ENCODE measurements at regions of chr1 and their contacts with region 1.

Region 1: DNA sequence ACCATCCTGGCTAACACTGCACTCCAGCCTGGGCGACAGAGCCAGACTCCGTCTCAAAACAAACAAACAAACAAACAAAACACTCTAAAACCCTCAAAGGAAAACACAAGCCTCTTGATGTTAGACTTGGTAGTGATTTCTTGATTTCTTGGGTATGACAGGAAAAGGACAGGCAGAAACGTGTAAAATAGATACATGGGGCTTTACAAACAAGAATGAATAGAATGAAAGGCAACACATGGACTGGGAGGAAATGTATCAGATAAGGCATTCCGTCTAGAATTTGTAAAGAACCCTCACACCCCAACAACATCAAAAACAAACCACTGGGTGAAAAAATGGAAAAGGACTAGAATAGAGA is 7.8 kb upstream of the PRXL2B start:
- DNase-seq: peak in 1 of 9 experiments; percentile 51
- ATAC-seq: no peak
- H3K4me3 ChIP-seq: peak overlapping the region; percentile 28 to 43
- H3K4me3 Mint-ChIP-seq: peak overlapping the region; percentile 76
- H3K27ac ChIP-seq: peak overlapping the region; percentile 81 to 93
- H3K27ac Mint-ChIP-seq: peak overlapping the region; percentile 96
- H3K4me1 ChIP-seq: peaks cover 57% of the 10 kb centered on the region
- H3K4me1 Mint-ChIP-seq: peaks cover 51% of the 10 kb centered on the region
- H3K27me3 ChIP-seq: no peaks in the 10 kb centered on the region
- H3K27me3 Mint-ChIP-seq: no peaks in the 10 kb centered on the region
- CTCF ChIP-seq: no peak

Region 2: DNA sequence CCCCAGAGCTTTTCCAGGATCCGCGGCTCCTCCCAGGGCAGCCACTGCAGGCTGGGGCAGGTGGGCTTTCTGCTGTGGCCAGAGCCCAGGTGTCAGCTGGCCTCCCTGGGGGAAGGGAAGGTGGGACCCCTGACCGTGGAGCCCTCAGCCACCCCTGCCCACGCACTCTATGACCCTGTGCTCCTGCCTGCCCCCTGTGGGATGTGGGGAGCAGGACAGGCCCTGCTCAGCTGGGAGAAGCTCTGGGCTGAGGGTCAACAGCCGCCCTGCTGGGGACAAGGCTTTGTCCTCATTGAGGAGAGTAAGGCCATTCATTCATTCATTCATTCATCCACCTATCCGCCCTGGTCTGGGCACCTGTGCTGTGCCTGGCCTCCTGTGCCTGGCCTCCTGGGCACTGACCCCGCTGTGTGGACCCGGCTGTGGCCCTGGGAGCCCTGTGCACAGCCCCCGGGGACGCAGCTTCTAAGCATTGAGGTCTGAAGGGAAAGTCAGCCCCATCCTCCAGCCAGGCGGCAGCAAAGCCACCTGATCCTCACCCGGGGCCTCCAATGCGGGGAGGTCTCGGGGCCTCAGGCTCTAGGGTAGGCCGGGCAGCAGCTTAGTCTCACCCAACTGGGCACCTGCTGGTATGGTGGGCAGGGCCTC is 16.7 kb before region 1 on chr1:
- CTCF ChIA-PET with region 1: interaction called, 28 read pairs
- POLR2A ChIA-PET with region 1: interaction called, 98 read pairs
- intact Hi-C with region 1: no loop called
- DNase-seq: peak in 3 of 9 experiments; percentile 22 to 53 (median 40)
- ATAC-seq: peak; percentile 67
- H3K4me3 ChIP-seq: no peak overlapping the region
- H3K4me3 Mint-ChIP-seq: no peak overlapping the region
- H3K27ac ChIP-seq: no peak overlapping the region
- H3K27ac Mint-ChIP-seq: peak overlapping the region; percentile 45
- H3K4me1 ChIP-seq: peaks cover 21% of the 10 kb centered on the region
- H3K4me1 Mint-ChIP-seq: peaks cover 23% of the 10 kb centered on the region
- H3K27me3 ChIP-seq: no peaks in the 10 kb centered on the region
- H3K27me3 Mint-ChIP-seq: no peaks in the 10 kb centered on the region
- CTCF ChIP-seq: peak; percentile 38

Measured in CD8-positive, alpha-beta T cell (primary cell).